ENCODE measurements at regions of chr3 and their contacts with region 1.

Region 1: DNA sequence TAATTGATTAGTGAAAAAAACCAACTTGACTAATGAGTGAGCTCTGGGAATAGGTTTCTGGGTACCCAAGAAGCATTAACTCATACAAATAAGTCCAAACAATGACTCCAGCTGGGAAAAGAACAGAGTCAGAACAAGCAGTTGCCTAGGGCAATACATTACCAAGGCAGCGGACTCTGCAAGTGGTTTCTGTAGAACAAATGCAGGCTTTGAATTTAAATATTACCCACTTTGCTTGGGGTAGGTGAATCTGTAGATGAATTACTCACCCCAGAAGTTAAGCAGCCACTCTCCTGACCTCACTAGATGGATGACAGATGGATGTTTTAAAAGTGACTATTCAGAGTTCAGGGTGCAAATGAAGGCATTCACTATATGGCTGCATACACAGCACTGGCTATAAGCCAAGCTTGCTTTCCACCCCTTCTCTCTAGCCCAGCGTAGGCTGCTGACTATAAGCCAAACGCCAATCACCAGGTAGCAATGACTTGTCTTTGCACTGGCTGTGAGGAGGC is 73.1 kb upstream of the BHLHE40 start:
- DNase-seq: peak; percentile 71
- H3K4me3 Mint-ChIP-seq: peak overlapping the region; percentile 60
- H3K27ac Mint-ChIP-seq: peak overlapping the region; percentile 88
- H3K4me1 Mint-ChIP-seq: peaks cover 77% of the 10 kb centered on the region
- H3K27me3 Mint-ChIP-seq: no peaks in the 10 kb centered on the region

Region 2: DNA sequence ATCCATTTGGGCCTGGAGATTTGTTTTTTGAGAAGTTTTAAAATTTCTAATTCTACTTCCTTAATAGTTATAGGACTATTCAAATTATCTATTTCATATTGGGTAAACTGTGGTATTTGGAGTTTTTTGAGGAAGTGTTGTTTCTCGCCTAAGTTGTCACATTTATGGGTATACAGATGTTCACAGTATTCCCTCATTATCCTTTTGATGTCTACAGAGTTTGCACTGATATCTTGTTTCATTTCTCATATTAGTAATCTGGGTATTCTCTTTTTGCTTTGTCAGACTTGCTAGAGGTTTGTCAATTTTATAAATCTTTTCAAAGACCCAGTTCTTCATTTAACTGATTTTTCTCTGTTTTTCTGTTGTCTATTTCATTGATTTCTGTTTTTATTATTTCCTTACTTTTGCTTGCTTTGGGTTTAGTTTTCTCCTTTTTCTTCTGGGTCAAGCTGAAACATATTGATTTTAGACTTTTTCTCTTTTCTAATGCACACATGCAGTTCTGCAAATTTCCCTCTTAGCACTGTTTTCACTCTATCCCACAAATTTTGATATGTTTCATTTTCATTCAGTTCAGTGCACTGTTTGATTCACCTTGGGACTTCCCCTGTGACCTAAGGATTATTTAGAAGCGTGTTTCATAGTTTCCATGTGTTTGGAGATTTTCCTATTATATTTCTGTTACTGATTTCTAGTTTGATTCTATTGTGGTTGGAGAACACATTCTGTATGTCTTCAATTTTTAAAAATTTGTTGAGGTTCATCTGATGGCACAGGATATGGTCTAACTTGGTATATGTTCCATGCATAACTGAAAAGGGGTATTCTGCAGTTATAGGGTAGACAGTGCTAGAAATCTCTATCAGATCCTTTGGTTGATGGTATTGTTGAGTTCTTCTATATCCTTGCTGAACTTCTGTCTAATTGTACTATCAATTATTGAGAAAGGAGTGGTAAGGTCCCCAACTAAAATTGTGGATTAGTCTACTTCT is 518.7 kb before region 1 on chr3:
- intact Hi-C with region 1: loop called (anchors 5 kb)
- DNase-seq: peak; percentile 48
- H3K4me3 Mint-ChIP-seq: peak overlapping the region; percentile 1
- H3K27ac Mint-ChIP-seq: peak overlapping the region; percentile 84
- H3K4me1 Mint-ChIP-seq: peaks cover 35% of the 10 kb centered on the region
- H3K27me3 Mint-ChIP-seq: no peaks in the 10 kb centered on the region

Region 3: DNA sequence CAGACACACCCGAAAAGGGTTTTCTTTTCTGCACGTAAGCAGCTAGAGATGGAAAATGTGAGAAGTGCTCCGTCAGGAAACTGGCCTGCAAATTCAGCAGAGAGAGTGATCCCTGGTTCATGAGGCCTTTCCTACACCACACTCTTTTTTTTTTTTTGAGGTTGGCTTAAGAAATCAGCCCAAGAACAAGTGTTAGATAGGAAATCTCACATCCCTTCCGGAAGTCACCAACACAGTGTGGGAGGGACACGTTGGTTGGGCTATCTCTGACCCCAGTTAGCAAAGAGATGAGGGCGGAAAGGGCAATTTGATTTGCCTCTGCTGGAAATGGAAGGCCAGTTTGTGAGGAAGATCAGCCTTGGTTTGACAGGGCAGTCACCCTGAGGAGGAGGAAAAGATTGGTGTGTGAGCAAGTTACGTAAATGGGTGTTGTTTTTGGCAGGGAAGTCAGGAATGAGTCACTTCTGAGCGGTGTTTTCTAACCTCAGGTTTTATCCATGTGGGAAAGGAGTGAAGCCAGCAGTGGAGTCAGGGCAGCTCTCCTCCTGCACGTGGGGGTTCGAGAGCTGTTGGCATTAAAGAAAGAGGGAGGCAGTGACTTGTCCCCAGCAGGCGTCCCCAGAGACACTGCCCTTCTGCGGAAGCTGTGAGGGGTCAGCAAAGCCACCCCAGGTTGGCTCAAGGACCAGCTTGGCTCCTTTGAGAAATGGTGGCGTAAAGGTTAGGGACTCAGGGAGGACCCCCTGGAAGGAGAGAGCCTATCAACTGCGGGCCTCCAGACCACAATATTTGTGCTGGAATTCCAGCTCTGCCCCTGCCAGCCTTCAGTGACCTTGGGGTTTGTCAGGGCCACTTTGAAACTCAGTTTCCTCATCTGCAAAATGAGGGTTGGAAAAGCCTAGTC is 164.5 kb before region 1 on chr3:
- intact Hi-C with region 1: loop called (anchors 5 kb)
- DNase-seq: peak; percentile 71
- H3K4me3 Mint-ChIP-seq: peak overlapping the region; percentile 47
- H3K27ac Mint-ChIP-seq: peak overlapping the region; percentile 89
- H3K4me1 Mint-ChIP-seq: peaks cover 66% of the 10 kb centered on the region
- H3K27me3 Mint-ChIP-seq: no peaks in the 10 kb centered on the region

Region 4: GRCh38 chr3:4928277-4928789 is 22.2 kb after region 1 on chr3:
- intact Hi-C with region 1: loop called (anchors 1 kb)
- DNase-seq: peak; percentile 72
- H3K4me3 Mint-ChIP-seq: no peak overlapping the region
- H3K27ac Mint-ChIP-seq: peak overlapping the region; percentile 65
- H3K4me1 Mint-ChIP-seq: peaks cover 24% of the 10 kb centered on the region
- H3K27me3 Mint-ChIP-seq: no peaks in the 10 kb centered on the region

Region 5: DNA sequence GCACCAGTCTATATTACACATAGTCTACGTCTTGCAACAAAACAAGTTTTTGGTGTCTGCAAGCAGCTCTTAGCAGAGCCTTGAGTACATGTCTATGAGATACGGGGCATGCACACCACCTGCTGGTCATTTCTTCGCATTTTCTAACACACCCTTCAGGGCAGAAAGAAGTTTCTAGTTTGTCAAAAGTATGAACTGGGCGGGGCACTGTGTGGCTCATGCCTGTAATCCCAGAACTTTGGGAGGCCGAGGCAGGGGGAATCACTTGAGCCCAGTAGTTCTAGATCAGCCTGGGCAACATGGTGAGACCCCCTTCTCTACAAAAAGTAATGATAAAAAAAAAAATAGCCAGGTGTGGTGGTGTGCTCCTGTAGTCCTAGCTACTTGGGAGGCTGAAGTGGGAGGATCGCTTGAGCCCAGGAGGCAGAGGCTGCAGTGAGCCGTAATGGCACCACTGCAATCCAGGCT is 151.7 kb after region 1 on chr3:
- intact Hi-C with region 1: loop called (anchors 5 kb)
- DNase-seq: peak; percentile 93
- H3K4me3 Mint-ChIP-seq: peak overlapping the region; percentile 29
- H3K27ac Mint-ChIP-seq: no peak overlapping the region
- H3K4me1 Mint-ChIP-seq: peaks cover 36% of the 10 kb centered on the region
- H3K27me3 Mint-ChIP-seq: peaks cover 7% of the 10 kb centered on the region

Measured in activated CD4-positive, alpha-beta T cell treated with anti-CD3 and anti-CD28 coated beads, Interleukin-2, amount 10 ng/mL, durations not matched to agents 24 days and 14 days (primary cell).